ENCODE measurements at regions of chr11 and their contacts with region 1.

Region 1: DNA sequence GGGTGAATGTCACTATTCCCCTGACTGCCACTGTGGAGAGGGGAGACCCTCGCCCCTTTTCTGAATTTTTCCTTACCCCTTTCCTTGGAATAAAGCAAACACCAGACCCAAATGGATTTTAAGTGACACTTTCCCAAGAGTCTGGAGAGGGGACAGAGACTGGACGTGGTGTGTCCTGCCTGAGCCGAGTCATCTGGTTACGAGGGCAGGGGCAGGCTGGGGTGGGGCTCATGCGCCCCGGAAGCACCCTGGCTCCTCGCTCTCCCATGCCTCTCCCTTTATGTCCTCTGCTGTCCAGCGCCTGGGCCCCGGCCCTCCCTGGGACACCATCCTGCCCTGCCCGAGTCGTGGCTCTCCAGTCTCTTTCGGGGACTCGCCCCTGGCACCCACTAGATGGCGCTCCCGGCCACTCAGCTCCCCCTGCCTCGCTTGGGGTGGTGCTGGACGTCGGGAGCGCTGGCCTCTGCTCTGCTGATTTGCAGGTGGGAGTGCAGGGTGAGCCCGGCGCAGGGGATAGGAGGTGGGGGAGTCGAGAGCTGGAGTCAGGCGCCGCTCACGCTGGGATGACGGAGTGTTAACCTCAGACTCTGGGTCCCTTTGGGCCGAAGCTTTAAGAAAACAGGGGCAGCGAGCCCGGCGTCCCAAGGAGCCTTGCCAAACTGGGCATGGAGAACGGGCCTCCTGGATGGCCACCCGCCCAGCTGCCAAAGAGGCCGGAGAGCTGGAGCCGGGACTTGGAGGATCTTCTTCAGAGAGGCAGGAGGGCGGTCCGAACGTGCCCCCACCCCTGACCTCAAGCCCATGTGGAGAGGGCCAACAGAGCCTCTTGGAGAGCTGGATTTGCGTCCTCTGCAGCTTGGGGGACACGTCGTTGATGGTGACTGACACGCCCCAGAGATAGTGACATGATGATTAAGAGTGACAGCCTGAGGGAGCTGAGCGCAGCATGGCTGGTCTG is 89.9 kb downstream of the RPS6KA4 start:
- DNase-seq: peak; percentile 66
- H3K4me3 Mint-ChIP-seq: peak overlapping the region; percentile 68
- H3K27ac Mint-ChIP-seq: no peak overlapping the region
- H3K4me1 Mint-ChIP-seq: peaks cover 15% of the 10 kb centered on the region
- H3K27me3 Mint-ChIP-seq: peaks cover 21% of the 10 kb centered on the region

Region 2: DNA sequence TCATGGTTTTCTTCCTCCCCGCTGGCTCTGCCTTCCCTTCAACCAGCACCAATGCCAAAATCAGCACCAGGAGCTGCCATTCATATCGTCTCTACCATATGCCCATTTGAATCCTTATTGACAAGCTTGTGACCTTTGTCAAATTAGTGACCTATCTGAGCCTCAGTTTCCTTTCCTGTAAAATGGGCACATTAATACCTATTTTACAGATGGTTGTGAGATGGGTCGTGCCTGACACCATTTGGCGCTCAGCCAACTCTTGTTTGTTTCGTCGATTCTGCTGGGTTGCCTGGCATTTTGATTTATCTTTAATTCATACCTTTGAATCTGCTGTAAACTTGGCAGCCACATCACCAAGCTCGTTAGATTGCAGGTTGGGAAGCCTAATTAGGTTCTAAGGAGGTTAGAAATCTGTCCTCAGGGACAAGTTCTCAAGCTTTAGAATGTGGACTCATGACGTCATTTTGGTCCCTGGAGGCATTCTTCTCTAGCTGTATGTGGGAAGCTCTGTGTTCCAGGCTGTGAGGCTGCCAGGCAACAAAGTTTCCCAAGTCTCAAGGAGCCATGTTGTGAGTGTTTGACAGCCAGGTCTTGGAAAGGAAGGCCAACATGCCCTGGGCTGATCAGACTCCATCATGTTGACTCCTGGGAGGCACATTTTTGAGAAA is 28.9 kb before region 1 on chr11:
- intact Hi-C with region 1: no loop called
- DNase-seq: no peak
- H3K4me3 Mint-ChIP-seq: no peak overlapping the region
- H3K27ac Mint-ChIP-seq: no peak overlapping the region
- H3K4me1 Mint-ChIP-seq: no peaks in the 10 kb centered on the region
- H3K27me3 Mint-ChIP-seq: peaks cover 10% of the 10 kb centered on the region

Region 3: GRCh38 chr11:64436000-64436399 is 12.9 kb before region 1 on chr11:
- intact Hi-C with region 1: no loop called
- DNase-seq: no peak
- H3K4me3 Mint-ChIP-seq: no peak overlapping the region
- H3K27ac Mint-ChIP-seq: no peak overlapping the region
- H3K4me1 Mint-ChIP-seq: no peaks in the 10 kb centered on the region
- H3K27me3 Mint-ChIP-seq: peaks cover 14% of the 10 kb centered on the region

Region 4: DNA sequence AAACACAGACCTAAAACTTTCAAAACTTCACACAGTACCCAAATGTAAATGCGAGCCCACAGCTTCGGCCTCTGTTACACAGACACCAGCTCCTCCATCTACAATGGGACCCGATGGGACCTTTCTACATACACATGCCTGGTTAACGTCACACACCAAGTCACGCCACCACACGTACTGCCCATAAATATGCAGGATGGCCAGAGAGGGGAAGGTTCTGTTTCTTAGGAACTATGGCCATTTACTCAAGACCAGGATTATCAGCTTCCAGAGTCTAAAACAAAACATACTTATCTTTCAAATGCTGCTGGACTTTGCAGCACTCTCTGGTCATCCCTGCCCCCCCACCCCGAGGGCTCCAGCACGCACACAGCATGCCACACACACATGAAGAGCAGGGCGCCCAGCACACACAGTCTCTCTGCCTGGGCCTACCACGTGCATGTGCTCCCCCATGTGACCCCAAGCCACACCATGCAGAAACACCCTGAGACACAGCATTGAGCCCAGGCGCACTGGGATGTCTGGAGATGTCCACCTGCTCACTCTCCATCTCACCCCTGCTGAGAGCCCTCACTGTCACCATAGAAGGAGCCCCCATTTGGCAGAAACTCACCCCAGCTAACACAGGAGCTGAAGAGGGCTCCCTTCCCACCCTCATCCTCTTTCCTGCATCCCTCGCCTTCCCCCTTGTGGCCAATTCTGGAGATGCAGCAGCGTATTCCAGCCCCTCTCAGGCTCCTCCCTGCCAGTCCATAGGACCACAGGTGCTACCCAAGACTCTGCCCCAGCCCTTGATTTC is 203.9 kb after region 1 on chr11:
- intact Hi-C with region 1: loop called (anchors 2 kb)
- DNase-seq: peak; percentile 62
- H3K4me3 Mint-ChIP-seq: no peak overlapping the region
- H3K27ac Mint-ChIP-seq: no peak overlapping the region
- H3K4me1 Mint-ChIP-seq: peaks cover 9% of the 10 kb centered on the region
- H3K27me3 Mint-ChIP-seq: peaks cover 5% of the 10 kb centered on the region